PC-9 (cell line): ENCODE measurements at regions of chr1 and their contacts with region 1.

Region 1: DNA sequence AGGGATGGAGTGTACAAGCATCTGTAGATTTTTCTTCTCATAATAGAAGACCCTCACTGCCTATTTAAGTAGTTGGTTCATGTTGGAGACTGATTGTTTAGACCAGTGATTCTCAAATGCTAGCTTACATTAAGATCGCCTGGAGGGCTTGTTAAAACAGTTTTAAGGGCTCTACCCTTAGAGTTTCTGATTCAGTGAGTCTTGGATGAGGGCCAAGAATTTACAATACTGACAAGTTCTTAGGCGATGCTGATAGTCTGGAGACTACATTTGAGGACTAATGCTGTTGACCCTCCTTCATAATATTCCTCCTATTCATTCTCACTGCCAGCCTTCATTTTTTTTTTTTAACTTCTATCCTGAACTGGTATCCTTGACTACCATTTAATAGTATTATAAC is 15.2 kb upstream of the AGO3 start:
- DNase-seq: no peak
- H3K4me3 ChIP-seq: no peak overlapping the region
- H3K27ac ChIP-seq: no peak overlapping the region
- H3K4me1 ChIP-seq: no peaks in the 10 kb centered on the region
- H3K27me3 ChIP-seq: no peaks in the 10 kb centered on the region
- CTCF ChIP-seq: no peak

Region 2: DNA sequence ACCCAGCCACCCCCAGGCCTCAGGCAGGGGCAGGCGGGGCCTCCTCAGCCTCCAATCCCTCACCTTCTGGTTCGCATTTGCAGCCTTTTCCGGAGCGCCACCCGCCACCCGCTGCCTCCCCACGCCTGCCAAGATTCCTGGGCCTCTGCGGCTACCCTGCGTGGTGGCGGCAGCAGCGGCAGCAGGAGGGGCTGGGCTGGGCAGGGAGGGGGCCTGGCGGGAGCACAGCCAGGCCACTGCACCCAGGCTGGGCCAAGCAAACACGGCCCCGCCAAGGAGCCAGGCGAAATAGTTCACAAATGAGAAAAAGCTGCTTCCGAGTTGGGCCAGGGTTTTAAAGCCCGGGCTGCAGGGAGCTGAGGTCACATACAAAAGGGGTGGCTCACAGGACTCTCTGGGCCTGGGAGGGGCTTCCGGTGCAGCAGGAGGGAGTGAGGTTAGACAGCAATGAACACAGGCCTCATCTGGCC is 199.5 kb after region 1 on chr1:
- CTCF ChIA-PET with region 1: interaction called, 12 read pairs
- POLR2A ChIA-PET with region 1: no interaction called
- intact Hi-C with region 1: no loop called
- DNase-seq: peak in 1 of 2 experiments; percentile 17
- H3K4me3 ChIP-seq: no peak overlapping the region
- H3K27ac ChIP-seq: no peak overlapping the region
- H3K4me1 ChIP-seq: 0 out of 2 replicates have a peak, but pooled peaks cover 3% of the 10 kb centered on the region
- H3K27me3 ChIP-seq: no peaks in the 10 kb centered on the region
- CTCF ChIP-seq: no peak